ENCODE measurements at regions of chr7 and their contacts with region 1.

Region 1: GRCh38 chr7:35624299-35625186 is 70.4 kb downstream of the HERPUD2 start:
- DNase-seq: peak; percentile 47 to 63
- ATAC-seq: peak; percentile 89 to 95
- H3K4me3 ChIP-seq: no peak overlapping the region
- H3K27ac ChIP-seq: no peak overlapping the region
- H3K4me1 ChIP-seq: no peaks in the 10 kb centered on the region
- CTCF ChIP-seq: peak; percentile 85
- EP300 ChIP-seq: no peak
- POLR2A ChIP-seq: no peak
- RAD21 ChIP-seq: peak; percentile 83 to 87

Region 2: DNA sequence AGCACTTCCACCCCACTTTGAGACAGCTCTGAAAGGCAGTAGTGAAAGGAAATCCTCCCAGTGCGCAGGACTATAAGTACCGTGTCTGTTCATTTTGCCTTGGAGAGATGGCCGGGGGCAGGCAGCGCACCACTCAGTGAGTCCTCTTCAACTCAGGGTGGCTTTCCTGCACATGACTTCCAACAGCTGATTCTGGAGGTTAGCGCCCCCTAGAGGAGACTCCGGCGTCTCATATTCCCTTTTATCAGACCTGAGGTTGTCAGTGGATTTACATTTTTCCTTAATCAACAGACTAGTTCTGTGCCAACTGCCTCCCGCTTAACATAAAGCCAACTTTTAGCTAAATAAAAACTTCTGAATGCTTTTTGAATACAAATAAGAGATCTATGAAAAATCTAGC is 30.6 kb before region 1 on chr7:
- CTCF ChIA-PET with region 1: interaction called, 13 read pairs
- POLR2A ChIA-PET with region 1: no interaction called
- DNase-seq: peak in 1 of 2 experiments; percentile 25
- ATAC-seq: peak in 1 of 2 experiments; percentile 54; a peak in 3 of 6 replicates
- H3K4me3 ChIP-seq: no peak overlapping the region
- H3K27ac ChIP-seq: no peak overlapping the region
- H3K4me1 ChIP-seq: 0 out of 3 replicates have a peak, but pooled peaks cover 3% of the 10 kb centered on the region
- CTCF ChIP-seq: peak; percentile 21; the same call in 1 of the 3 replicates
- EP300 ChIP-seq: no peak
- POLR2A ChIP-seq: no peak
- RAD21 ChIP-seq: no peak

Region 3: DNA sequence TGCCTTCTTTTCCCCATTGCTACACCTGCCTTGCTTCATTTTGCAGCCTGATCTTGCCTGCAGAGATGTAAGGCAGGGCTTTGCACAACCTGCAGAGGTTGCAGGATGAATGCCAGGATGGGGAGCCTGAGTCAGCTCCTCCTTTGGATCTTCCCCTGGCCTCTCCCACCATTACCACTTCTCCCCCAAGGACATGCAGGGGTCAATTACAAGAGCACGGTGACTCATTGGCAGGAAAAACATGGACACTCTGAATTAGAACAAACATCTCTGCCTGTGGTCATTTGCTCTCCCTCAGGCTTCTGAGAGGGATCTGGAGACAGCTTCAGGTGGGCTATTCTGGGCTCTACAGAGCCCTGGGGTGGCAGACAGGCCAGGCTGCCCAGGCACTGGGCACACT is 18.8 kb before region 1 on chr7:
- CTCF ChIA-PET with region 1: interaction called, 11 read pairs
- POLR2A ChIA-PET with region 1: no interaction called
- DNase-seq: peak in 1 of 2 experiments; percentile 8
- ATAC-seq: no peak; a peak in 2 of 6 replicates
- H3K4me3 ChIP-seq: no peak overlapping the region
- H3K27ac ChIP-seq: no peak overlapping the region
- H3K4me1 ChIP-seq: 0 out of 3 replicates have a peak, but pooled peaks cover 2% of the 10 kb centered on the region
- CTCF ChIP-seq: no peak
- EP300 ChIP-seq: no peak
- POLR2A ChIP-seq: no peak
- RAD21 ChIP-seq: no peak

Region 4: DNA sequence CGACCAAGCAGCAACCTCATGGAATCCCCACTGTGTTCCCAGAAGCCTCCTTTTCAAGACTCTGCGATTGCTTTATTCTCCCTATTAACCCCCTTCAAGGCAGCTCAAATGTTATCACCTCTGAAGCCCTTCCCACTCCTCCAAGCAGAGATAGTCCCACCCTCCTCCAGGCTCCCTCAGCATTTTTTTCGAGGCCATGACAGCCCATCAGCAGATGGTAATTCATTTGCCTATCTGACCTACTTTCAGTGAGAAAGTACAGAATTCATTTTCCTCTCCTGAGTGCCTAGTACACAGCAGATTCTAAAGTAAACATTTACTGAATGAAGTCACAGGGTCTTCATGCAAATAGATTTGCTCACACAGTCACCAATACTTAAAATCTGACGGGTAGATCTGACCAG is 22.6 kb after region 1 on chr7:
- CTCF ChIA-PET with region 1: interaction called, 11 read pairs
- POLR2A ChIA-PET with region 1: no interaction called
- DNase-seq: no peak
- ATAC-seq: no peak
- H3K4me3 ChIP-seq: no peak overlapping the region
- H3K27ac ChIP-seq: no peak overlapping the region
- H3K4me1 ChIP-seq: peaks cover 5% of the 10 kb centered on the region; the same call in 2 of the 3 replicates
- CTCF ChIP-seq: no peak
- EP300 ChIP-seq: no peak
- POLR2A ChIP-seq: no peak
- RAD21 ChIP-seq: no peak